ENCODE measurements at regions of chr15 and their contacts with region 1.

Region 1: DNA sequence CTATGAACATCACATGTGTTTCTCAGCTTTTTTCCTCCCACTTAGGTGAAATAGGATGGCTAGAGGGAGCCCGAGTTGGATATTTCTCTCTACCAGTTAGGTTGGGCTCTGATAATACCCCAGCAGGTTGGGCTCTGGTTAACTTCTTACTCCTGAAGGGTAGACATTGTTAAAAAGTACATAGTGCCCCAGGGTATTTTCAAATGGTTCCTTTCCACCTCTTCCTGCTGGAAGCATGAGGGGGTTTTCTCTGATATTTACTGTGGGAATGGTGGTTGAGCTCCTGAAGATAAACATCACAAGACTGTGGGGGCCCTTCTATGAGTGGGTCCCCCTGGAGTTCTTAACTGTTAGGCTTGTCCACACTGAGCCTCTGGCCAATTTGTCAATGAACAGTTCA is 36.1 kb upstream of the SPESP1 start:
- DNase-seq: no peak
- ATAC-seq: no peak
- H3K4me3 ChIP-seq: no peak overlapping the region
- H3K27ac ChIP-seq: no peak overlapping the region
- H3K4me1 ChIP-seq: no peaks in the 10 kb centered on the region
- H3K27me3 ChIP-seq: peaks cover 19% of the 10 kb centered on the region
- CTCF ChIP-seq: no peak

Region 2: GRCh38 chr15:68709226-68709625 is 185.0 kb before region 1 on chr15:
- CTCF ChIA-PET with region 1: no interaction called
- POLR2A ChIA-PET with region 1: interaction called, 11 read pairs
- in situ Hi-C with region 1: no loop called
- intact Hi-C with region 1: no loop called
- DNase-seq: no peak
- ATAC-seq: no peak
- H3K4me3 ChIP-seq: no peak overlapping the region
- H3K27ac ChIP-seq: no peak overlapping the region
- H3K4me1 ChIP-seq: no peaks in the 10 kb centered on the region
- H3K27me3 ChIP-seq: no peaks in the 10 kb centered on the region; the same call in 1 of the 2 replicates
- CTCF ChIP-seq: no peak

Region 3: DNA sequence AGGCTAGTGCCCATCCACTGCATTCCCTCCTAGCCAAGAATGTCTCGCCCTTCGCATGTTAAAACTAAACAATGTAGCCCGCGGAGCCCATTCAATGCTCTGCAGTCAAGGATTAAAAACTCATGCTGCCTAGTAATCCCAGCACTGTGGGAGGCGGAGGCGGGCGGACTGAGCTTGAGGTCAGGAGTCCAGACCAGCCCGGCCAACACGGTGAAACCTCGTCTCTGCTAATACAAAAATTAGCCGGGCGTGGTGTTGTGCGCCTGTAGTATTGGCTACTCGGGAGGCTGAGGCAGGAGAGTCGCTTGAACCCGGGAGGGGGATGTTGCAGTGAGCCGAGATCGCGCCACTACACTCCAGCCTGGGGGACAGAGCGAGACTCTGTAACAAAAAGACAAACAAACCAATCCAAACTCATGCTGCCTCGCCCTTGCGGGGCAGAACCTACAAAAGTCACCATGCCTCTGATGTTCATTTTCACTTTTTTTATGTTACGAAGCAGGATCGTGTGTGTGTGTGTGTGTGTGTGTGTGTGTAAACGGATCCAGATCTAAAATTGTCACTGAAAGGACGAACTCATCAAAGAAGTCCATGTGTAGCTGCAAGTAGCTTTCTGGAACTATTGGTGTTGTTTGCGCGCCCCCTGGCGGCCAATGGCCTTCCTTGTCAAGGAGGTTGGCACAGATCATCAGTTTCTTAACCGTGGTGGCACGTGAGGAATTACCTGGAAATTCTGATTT is 18.7 kb before region 1 on chr15:
- CTCF ChIA-PET with region 1: no interaction called
- POLR2A ChIA-PET with region 1: no interaction called
- in situ Hi-C with region 1: no loop called
- intact Hi-C with region 1: no loop called
- DNase-seq: peak; percentile 75
- ATAC-seq: peak; percentile 97
- H3K4me3 ChIP-seq: peak overlapping the region; percentile 16 to 52
- H3K27ac ChIP-seq: no peak overlapping the region
- H3K4me1 ChIP-seq: no peaks in the 10 kb centered on the region
- H3K27me3 ChIP-seq: peaks cover 2% of the 10 kb centered on the region; the same call in 1 of the 2 replicates
- CTCF ChIP-seq: peak; percentile 90

Measured in Panc1 (cell line).